Activated CD4-positive, alpha-beta memory T cell treated with anti-CD3 and anti-CD28 coated beads for 36 hours (primary cell): ENCODE measurements at regions of chr14 and their contacts with region 1.

Region 1: GRCh38 chr14:45112889-45113781 is 21.1 kb downstream of the FKBP3 start:
- DNase-seq: no peak
- H3K4me3 Mint-ChIP-seq: no peak overlapping the region
- H3K27ac Mint-ChIP-seq: peak overlapping the region; percentile 75
- H3K4me1 Mint-ChIP-seq: peaks cover 30% of the 10 kb centered on the region
- H3K27me3 Mint-ChIP-seq: no peaks in the 10 kb centered on the region

Region 2: DNA sequence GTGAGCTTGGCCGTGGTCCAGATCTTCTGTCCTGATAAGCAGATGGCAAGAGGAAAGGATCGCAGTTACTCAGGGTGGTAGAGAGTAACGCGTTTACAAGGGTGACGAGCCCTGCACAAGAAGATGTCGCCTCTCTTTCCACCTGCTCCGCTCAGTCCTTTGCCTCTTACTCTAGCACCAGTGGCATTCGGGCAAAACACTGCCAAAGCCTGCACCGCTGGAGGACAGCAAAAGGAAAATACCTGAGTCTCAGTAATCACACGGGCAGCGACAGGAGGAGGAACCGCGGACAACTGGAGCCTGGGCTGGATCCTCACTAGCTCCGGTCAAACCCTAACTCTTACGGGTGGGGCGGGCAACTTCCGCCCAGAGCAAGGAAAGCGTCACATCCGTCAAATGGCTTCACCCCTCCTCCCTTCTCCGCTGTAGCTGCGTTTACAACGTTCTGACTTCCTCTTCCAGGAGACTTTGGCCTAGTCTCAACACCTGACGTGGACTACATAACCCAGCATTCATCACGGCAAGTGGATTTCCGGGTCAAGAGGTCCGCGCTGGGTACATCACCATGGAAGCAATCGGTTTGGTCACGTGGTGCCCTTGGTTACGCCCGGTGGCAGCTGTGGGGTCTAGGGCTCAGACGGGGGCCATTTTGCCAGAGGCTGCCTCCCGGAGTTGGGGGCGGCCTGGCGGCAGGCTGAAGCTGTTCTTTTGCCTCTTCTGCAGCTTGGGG is 151.4 kb before region 1 on chr14 and contains the starts of genes KLHL28 and TOGARAM1:
- CTCF ChIA-PET with region 1: interaction called, 3 read pairs
- POLR2A ChIA-PET with region 1: interaction called, 8 read pairs
- intact Hi-C with region 1: loop called (anchors 1 kb)
- DNase-seq: peak; percentile 97
- H3K4me3 Mint-ChIP-seq: no peak within 1 kb of the TSS
- H3K27ac Mint-ChIP-seq: no peak within 1 kb of the TSS
- H3K4me1 Mint-ChIP-seq: peaks cover 54% of the 10 kb centered on the region
- H3K27me3 Mint-ChIP-seq: no peaks in the 10 kb centered on the region
- total RNA-seq, gene KLHL28: 11.0 to 11.8 TPM
- total RNA-seq, gene TOGARAM1: 4.5 to 5.4 TPM

Region 3: DNA sequence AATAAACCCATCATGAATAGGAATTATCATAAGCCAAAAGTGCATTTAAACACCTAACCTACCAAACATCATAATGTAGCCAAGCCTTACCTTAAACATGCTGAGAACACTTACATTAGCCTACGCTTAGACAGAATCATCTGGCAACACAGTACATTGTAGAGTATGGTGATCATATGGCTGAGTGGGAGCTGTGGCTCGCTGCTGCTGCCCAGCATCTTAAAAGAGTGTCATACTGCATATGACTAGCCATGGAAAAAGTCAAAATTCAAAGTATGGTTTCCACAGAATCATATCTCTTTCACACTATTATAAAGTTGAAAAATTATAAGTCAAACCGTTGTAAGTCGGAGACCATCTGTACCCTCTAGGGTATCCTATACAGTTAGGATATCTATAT is 61.2 kb before region 1 on chr14:
- CTCF ChIA-PET with region 1: no interaction called
- POLR2A ChIA-PET with region 1: no interaction called
- intact Hi-C with region 1: no loop called
- DNase-seq: no peak
- H3K4me3 Mint-ChIP-seq: no peak overlapping the region
- H3K27ac Mint-ChIP-seq: no peak overlapping the region
- H3K4me1 Mint-ChIP-seq: no peaks in the 10 kb centered on the region
- H3K27me3 Mint-ChIP-seq: no peaks in the 10 kb centered on the region

Region 4: DNA sequence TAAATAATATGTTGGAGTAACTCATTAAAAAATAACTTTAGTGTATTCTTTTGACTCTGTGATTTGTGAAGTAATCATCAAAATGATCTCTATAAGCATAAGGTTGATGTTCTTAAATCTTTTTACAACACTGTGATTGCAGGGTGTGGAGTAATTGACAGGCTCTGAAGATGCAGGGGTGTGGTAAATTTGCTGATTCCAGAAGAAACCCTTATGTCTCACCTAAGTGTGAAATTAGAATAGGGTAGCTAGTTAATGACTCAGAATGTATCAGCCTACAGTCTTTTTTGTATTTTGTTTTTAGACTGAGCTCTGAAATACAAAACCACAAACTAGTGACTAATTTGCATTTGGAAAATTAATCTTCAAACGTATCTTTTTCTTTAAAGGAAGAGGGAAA is 23.3 kb before region 1 on chr14:
- CTCF ChIA-PET with region 1: no interaction called
- POLR2A ChIA-PET with region 1: interaction called, 4 read pairs
- intact Hi-C with region 1: loop called (anchors 1 kb)
- DNase-seq: peak; percentile 20
- H3K4me3 Mint-ChIP-seq: peak overlapping the region; percentile 52
- H3K27ac Mint-ChIP-seq: peak overlapping the region; percentile 70
- H3K4me1 Mint-ChIP-seq: peaks cover 73% of the 10 kb centered on the region
- H3K27me3 Mint-ChIP-seq: no peaks in the 10 kb centered on the region

Region 5: DNA sequence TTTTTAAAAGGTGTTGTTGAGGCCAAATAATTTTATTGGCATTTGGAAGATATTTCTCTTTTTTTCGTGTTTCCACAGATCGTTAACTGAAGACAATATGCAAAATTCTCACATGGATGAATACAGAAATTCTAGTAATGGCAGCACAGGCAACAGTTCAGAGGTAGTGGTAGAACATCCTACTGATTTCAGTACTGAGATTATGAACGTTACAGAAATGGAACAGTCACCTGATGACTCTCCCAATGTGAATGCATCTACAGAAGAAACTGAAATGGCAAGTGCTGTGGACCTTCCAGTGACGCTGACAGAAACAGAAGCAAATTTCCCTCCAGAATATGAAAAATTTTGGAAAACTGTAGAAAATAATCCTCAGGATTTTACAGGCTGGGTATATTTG is 18.0 kb before region 1 on chr14:
- CTCF ChIA-PET with region 1: no interaction called
- POLR2A ChIA-PET with region 1: interaction called, 4 read pairs
- intact Hi-C with region 1: loop called (anchors 1 kb)
- DNase-seq: no peak
- H3K4me3 Mint-ChIP-seq: no peak overlapping the region
- H3K27ac Mint-ChIP-seq: peak overlapping the region; percentile 67
- H3K4me1 Mint-ChIP-seq: peaks cover 40% of the 10 kb centered on the region
- H3K27me3 Mint-ChIP-seq: no peaks in the 10 kb centered on the region

Region 6: DNA sequence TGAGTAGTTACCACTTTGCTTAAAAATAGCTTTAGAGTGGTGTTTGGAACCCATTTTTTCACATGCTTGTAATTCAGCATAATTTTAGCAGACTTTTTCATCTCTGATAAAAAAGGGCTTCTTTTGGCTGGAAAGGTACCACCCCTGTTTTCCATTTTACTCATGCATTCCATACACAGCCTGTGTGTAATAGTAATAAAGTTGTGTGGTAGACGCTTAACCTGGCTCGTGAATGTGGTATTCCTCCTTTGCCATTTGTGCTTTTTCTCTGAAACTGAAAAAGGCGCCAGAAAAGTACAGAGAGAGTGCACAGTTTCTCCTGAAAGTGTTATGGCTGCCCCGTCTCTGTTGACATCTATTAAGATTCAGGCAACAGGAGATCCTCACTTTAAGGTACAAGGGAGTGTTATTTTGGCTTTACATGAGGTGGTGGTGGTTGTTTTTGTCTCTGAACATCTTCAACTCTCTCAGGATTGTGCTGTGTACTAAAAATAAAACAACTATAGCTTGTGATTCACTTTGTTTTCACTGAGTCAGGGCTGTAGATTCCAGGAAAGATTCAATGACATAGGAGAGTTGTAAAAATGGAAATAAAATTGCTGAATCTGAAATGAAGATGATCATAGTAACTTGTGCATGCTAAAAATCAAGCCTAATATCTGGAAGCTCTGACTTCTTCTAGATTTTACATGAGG is 185.4 kb after region 1 on chr14:
- CTCF ChIA-PET with region 1: no interaction called
- POLR2A ChIA-PET with region 1: no interaction called
- intact Hi-C with region 1: loop called (anchors 1 kb)
- DNase-seq: no peak
- H3K4me3 Mint-ChIP-seq: no peak overlapping the region
- H3K27ac Mint-ChIP-seq: peak overlapping the region; percentile 84
- H3K4me1 Mint-ChIP-seq: peaks cover 4% of the 10 kb centered on the region
- H3K27me3 Mint-ChIP-seq: no peaks in the 10 kb centered on the region